Endothelial cell of umbilical vein (primary cell): ENCODE measurements at regions of chr6 and their contacts with region 1.

Region 1: GRCh38 chr6:119742188-119742803 is 392.7 kb upstream of the MAN1A1 start:
- DNase-seq: peak; percentile 42
- H3K4me3 ChIP-seq: no peak overlapping the region
- H3K27ac ChIP-seq: no peak overlapping the region
- H3K4me1 ChIP-seq: no peaks in the 10 kb centered on the region
- H3K27me3 ChIP-seq: no peaks in the 10 kb centered on the region
- CTCF ChIP-seq: peak; percentile 64 to 72
- POLR2A ChIP-seq: no peak

Region 2: GRCh38 chr6:119147101-119148053 is 594.9 kb before region 1 on chr6:
- CTCF ChIA-PET with region 1: no interaction called
- POLR2A ChIA-PET with region 1: no interaction called
- dilution Hi-C with region 1: no loop called
- intact Hi-C with region 1: loop called (anchors 1 kb)
- DNase-seq: peak; percentile 77
- H3K4me3 ChIP-seq: no peak overlapping the region
- H3K27ac ChIP-seq: peak overlapping the region; percentile 86
- H3K4me1 ChIP-seq: peaks cover 29% of the 10 kb centered on the region
- H3K27me3 ChIP-seq: no peaks in the 10 kb centered on the region
- CTCF ChIP-seq: no peak
- POLR2A ChIP-seq: no peak

Region 3: DNA sequence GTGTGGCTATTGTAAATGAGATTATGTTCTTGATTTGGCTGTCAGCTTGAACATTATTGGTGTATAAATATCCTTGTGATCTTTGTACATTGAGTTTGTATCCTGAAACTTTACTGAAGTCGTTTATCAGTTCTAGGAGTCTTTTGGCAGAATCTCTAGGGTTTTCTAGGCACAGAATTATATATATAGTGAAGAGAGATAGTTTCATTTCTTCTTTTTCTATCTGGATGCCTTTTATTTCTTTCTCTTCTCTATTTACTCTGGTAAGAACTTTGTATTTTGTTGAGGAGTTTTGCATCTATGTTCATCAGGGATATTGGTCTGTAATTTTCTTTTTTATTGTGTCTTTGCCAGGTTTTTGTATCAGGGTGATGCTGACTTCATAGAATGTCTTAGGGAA is 196.5 kb after region 1 on chr6:
- CTCF ChIA-PET with region 1: no interaction called
- POLR2A ChIA-PET with region 1: no interaction called
- dilution Hi-C with region 1: no loop called
- intact Hi-C with region 1: no loop called
- DNase-seq: no peak
- H3K4me3 ChIP-seq: no peak overlapping the region
- H3K27ac ChIP-seq: no peak overlapping the region
- H3K4me1 ChIP-seq: no peaks in the 10 kb centered on the region
- H3K27me3 ChIP-seq: no peaks in the 10 kb centered on the region
- CTCF ChIP-seq: no peak
- POLR2A ChIP-seq: no peak

Region 4: GRCh38 chr6:119978274-119978889 is 236.1 kb after region 1 on chr6:
- CTCF ChIA-PET with region 1: no interaction called
- POLR2A ChIA-PET with region 1: no interaction called
- dilution Hi-C with region 1: no loop called
- intact Hi-C with region 1: loop called (anchors 2 kb)
- DNase-seq: no peak
- H3K4me3 ChIP-seq: no peak overlapping the region
- H3K27ac ChIP-seq: no peak overlapping the region
- H3K4me1 ChIP-seq: no peaks in the 10 kb centered on the region
- H3K27me3 ChIP-seq: no peaks in the 10 kb centered on the region
- CTCF ChIP-seq: peak in 1 of 2 donors; percentile 13
- POLR2A ChIP-seq: no peak

Region 5: GRCh38 chr6:120826253-120826652 is 1084.0 kb after region 1 on chr6:
- CTCF ChIA-PET with region 1: no interaction called
- POLR2A ChIA-PET with region 1: no interaction called
- dilution Hi-C with region 1: no loop called
- intact Hi-C with region 1: loop called (anchors 2 kb)
- DNase-seq: no peak
- H3K4me3 ChIP-seq: no peak overlapping the region
- H3K27ac ChIP-seq: no peak overlapping the region
- H3K4me1 ChIP-seq: no peaks in the 10 kb centered on the region
- H3K27me3 ChIP-seq: no peaks in the 10 kb centered on the region
- CTCF ChIP-seq: peak in 1 of 2 donors; percentile 16
- POLR2A ChIP-seq: no peak

Region 6: DNA sequence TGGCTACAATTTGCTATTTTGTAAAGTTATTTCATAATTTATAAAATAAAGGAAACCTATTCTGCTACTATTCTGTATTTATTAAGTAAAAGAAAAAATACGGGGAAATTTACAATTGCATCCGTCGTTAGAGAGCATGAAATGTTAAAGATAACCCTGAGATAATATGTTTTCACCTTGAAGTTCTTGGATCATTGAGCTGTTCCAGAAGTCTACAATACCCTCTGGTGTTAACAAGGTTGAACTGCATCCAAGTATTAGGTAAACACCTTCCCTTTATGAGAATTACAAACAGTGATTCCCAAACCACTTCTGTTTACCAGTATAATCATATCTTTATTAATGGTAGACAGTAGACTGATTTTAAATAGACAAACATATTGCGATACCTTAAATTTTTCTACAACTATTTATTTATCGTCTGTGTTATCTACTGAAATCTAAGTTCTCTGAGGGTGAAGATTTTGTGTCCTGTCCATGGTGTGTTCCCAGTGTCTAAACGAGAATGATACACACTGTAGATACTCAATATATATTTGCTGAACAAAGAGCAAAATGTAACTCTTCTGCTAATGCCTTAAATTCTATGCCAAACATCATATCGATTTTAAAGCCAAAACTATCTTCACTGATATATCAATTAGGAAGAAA is 1563.8 kb after region 1 on chr6:
- CTCF ChIA-PET with region 1: no interaction called
- POLR2A ChIA-PET with region 1: no interaction called
- dilution Hi-C with region 1: no loop called
- intact Hi-C with region 1: loop called (anchors 2 kb)
- DNase-seq: peak; percentile 54
- H3K4me3 ChIP-seq: no peak overlapping the region
- H3K27ac ChIP-seq: no peak overlapping the region
- H3K4me1 ChIP-seq: no peaks in the 10 kb centered on the region
- H3K27me3 ChIP-seq: no peaks in the 10 kb centered on the region
- CTCF ChIP-seq: peak; percentile 33 to 43
- POLR2A ChIP-seq: no peak